Activated naive CD4-positive, alpha-beta T cell treated with anti-CD3 and anti-CD28 coated beads for 36 hours (primary cell): ENCODE measurements at regions of chr4 and their contacts with region 1.

Region 1: GRCh38 chr4:176150356-176150682 is 45.1 kb downstream of the SPATA4 start:
- DNase-seq: peak; percentile 6
- H3K4me3 Mint-ChIP-seq: no peak overlapping the region
- H3K27ac Mint-ChIP-seq: no peak overlapping the region
- H3K4me1 Mint-ChIP-seq: no peaks in the 10 kb centered on the region
- H3K27me3 Mint-ChIP-seq: no peaks in the 10 kb centered on the region

Region 2: GRCh38 chr4:175127314-175127713 is 1023.0 kb before region 1 on chr4:
- CTCF ChIA-PET with region 1: no interaction called
- intact Hi-C with region 1: no loop called
- DNase-seq: no peak
- H3K4me3 Mint-ChIP-seq: no peak overlapping the region
- H3K27ac Mint-ChIP-seq: no peak overlapping the region
- H3K4me1 Mint-ChIP-seq: no peaks in the 10 kb centered on the region
- H3K27me3 Mint-ChIP-seq: no peaks in the 10 kb centered on the region

Region 3: DNA sequence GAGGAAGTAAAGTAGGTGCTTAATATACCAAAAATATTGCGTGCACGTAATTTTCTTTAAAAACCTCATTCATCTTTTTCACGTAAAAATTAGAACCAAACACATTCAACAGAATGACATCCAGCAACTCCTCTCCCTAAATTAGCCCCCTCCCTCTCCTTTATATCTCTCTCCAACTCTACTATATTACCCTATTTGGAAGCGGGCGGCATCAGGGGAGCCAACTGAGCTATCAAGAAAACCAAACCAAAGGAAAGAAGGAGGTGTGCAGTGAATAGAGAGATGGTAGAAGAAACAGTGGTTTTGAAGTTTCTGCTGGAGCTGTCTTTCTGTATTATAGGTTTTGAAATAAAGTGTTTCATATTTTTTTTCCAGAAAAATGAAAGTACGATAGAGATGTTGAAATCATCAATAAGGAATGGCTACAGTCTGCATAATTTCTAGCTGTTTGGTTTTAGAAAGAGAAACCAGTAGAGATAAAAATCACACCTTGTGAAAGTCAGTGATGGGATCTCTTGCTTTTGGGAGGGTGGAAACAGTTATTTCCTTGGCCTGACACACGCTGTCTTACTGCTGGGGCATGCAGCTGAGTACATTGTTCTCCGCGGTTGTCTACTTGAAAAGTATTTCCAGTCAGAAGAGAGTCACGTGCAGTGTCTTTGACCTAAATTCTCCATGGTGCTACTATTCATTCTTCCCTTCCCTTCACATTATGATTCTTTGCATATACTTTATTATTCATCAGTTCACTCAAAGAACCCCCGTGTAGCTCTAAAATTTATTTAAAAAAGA is 178.7 kb before region 1 on chr4:
- CTCF ChIA-PET with region 1: no interaction called
- intact Hi-C with region 1: no loop called
- DNase-seq: no peak
- H3K4me3 Mint-ChIP-seq: no peak overlapping the region
- H3K27ac Mint-ChIP-seq: no peak overlapping the region
- H3K4me1 Mint-ChIP-seq: no peaks in the 10 kb centered on the region
- H3K27me3 Mint-ChIP-seq: no peaks in the 10 kb centered on the region

Region 4: DNA sequence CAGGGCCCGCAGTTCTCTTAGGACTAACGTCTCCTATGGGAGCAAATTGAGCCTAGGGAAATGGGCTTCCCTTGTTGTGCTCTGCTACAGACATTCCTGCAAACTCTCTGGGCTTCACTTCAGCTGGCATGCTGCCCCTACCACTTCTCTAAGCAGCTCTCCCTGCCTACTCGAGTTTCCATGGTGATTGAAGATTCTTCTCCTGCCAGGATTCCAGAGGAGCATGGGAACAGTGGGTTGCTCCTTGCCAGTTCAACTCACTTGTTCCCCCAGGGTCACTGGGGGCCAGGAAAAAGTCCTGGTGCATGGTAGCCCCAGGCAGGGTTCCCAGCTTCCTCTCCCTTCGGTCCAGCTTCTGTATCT is 105.7 kb before region 1 on chr4:
- CTCF ChIA-PET with region 1: no interaction called
- intact Hi-C with region 1: no loop called
- DNase-seq: no peak
- H3K4me3 Mint-ChIP-seq: no peak overlapping the region
- H3K27ac Mint-ChIP-seq: no peak overlapping the region
- H3K4me1 Mint-ChIP-seq: no peaks in the 10 kb centered on the region
- H3K27me3 Mint-ChIP-seq: peaks cover 28% of the 10 kb centered on the region

Region 5: DNA sequence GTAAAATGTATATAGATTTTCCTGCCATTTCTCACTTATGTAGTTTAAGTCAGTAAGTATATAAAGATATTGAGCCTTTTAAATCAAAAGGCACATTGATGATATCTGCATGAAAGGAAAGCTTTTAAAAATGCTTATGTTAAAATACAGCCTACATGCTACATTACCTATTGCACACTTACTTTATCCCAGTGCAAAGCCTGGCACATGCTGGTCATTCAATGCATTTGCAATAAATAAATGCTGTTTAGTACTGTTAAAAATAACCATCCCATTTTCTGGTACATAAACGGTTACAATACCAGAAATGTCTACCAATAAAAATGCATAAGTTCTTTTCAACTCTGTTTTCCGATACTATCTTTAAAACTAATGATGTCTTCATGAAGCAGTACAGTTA is 67.2 kb after region 1 on chr4:
- CTCF ChIA-PET with region 1: interaction called, 3 read pairs
- intact Hi-C with region 1: loop called (anchors 1 kb)
- DNase-seq: no peak
- H3K4me3 Mint-ChIP-seq: no peak overlapping the region
- H3K27ac Mint-ChIP-seq: no peak overlapping the region
- H3K4me1 Mint-ChIP-seq: no peaks in the 10 kb centered on the region
- H3K27me3 Mint-ChIP-seq: no peaks in the 10 kb centered on the region

Region 6: GRCh38 chr4:176277162-176277904 is 127.0 kb after region 1 on chr4:
- CTCF ChIA-PET with region 1: no interaction called
- intact Hi-C with region 1: loop called (anchors 1 kb)
- DNase-seq: peak; percentile 32
- H3K4me3 Mint-ChIP-seq: no peak overlapping the region
- H3K27ac Mint-ChIP-seq: no peak overlapping the region
- H3K4me1 Mint-ChIP-seq: no peaks in the 10 kb centered on the region
- H3K27me3 Mint-ChIP-seq: peaks cover 15% of the 10 kb centered on the region

Region 7: GRCh38 chr4:176340871-176341685 is 190.8 kb after region 1 on chr4:
- CTCF ChIA-PET with region 1: interaction called, 34 read pairs
- intact Hi-C with region 1: loop called (anchors 1 kb)
- DNase-seq: no peak
- H3K4me3 Mint-ChIP-seq: no peak overlapping the region
- H3K27ac Mint-ChIP-seq: no peak overlapping the region
- H3K4me1 Mint-ChIP-seq: peaks cover 2% of the 10 kb centered on the region
- H3K27me3 Mint-ChIP-seq: no peaks in the 10 kb centered on the region